ENCODE measurements at regions of chr22 and their contacts with region 1.

Region 1: GRCh38 chr22:44625981-44626687 is 75.9 kb upstream of the PRR5 start:
- DNase-seq: peak; percentile 73
- H3K4me3 Mint-ChIP-seq: no peak overlapping the region
- H3K27ac Mint-ChIP-seq: no peak overlapping the region
- H3K4me1 Mint-ChIP-seq: peaks cover 2% of the 10 kb centered on the region
- H3K27me3 Mint-ChIP-seq: peaks cover 3% of the 10 kb centered on the region

Region 2: GRCh38 chr22:43993027-43993760 is 632.9 kb before region 1 on chr22:
- intact Hi-C with region 1: loop called (anchors 1 kb)
- DNase-seq: peak; percentile 39
- H3K4me3 Mint-ChIP-seq: no peak overlapping the region
- H3K27ac Mint-ChIP-seq: peak overlapping the region; percentile 0
- H3K4me1 Mint-ChIP-seq: peaks cover 15% of the 10 kb centered on the region
- H3K27me3 Mint-ChIP-seq: no peaks in the 10 kb centered on the region

Region 3: DNA sequence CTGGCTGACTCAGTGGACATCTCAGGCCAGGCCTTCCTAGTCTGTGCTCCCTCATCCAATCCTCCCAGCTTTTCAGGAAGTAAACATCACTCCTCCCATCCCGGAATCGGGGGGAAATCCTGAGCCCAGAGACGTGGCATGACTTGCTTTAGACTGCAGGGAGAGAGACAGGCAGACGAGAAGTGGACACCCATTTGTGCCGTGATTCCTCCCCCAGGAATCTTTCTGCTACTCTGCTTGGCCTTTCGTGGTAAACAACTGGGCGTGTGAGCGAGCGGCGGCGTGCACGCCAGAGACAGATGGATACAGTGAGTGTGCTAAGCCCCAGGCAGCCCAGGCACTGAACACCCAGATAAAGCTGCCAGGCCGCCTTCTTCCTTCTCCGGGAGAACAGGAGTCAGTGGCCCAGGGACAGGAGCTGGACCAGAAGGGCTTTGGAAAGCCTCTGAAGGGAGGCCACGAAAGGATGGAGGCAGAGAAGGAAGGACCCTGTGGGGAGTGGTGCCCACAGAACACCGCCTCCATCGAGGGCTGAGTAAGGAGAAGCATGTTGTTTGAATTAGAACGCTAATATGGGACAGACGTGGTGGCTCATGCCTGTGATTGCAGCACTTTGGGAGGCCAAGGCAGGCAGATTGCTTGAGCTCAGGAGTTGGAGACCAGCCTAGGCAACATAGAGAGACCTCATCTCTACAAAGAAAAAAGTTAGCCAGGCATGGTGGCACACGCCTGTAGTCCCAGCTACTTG is 22.9 kb after region 1 on chr22:
- intact Hi-C with region 1: no loop called
- DNase-seq: no peak
- H3K4me3 Mint-ChIP-seq: no peak overlapping the region
- H3K27ac Mint-ChIP-seq: no peak overlapping the region
- H3K4me1 Mint-ChIP-seq: no peaks in the 10 kb centered on the region
- H3K27me3 Mint-ChIP-seq: peaks cover 8% of the 10 kb centered on the region

Measured in activated T-helper 2 cell treated with anti-CD3 and anti-CD28 coated beads, Interferon-gamma antibody, Interleukin-2, Interleukin-4, amounts not matched to agents 10 μg/mL and 5 μg/mL and 100 μg/mL, durations not matched to agents 14 hours and 24 hours and 36 hours (primary cell).